BJ (cell line): ENCODE measurements at regions of chr15 and their contacts with region 1.

Region 1: DNA sequence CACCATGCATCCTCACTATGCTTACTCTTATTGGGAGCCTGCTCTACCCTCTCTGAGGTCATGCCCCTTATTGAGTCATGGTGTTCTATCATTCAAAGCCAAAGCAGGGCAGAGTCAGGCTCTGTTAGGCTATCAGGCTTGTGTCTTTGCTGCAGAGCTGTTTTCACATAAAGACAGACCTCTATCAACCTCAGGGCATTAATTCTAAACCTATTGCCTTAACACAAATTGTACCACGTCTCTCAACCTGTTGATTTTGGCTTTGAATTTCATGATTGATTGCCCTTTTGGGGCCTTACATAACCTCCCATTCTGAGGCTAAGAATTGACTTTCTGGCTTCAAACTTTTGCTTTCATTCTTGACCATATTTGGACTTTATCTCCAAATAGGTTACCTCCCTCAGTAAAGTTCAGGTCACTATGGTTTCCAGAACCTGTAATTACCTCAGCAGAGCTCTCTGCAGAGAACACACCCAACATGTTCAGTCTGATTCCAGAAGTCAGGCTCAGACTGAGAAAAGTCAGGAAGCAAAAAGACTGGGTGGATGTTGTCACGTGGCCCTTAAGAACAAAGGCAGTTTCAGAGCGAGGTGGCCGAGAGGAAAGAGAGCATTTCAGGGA is 221.4 kb upstream of the NANOGP8 start:
- DNase-seq: no peak
- H3K4me3 ChIP-seq: no peak overlapping the region
- H3K27me3 ChIP-seq: no peaks in the 10 kb centered on the region
- CTCF ChIP-seq: no peak

Region 2: DNA sequence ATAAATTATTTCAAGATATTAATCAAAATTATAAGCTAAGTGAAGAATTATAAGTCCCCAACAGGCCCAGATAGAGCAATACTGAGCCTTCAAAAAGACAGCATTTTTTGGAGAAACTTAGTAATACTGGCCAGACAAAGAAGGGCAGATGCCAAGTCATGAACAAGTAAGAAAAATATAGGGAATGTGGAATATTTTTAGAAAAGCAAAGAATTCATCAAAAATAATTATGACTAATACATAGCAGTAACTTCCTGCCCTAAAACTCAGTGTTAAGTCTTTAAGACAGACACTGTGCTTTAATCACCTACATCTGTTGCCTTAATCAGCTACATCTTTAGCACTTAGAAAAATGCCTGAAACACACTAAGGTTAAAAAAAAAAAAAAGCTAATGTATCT is 208.3 kb after region 1 on chr15:
- CTCF ChIA-PET with region 1: no interaction called
- POLR2A ChIA-PET with region 1: no interaction called
- DNase-seq: peak; percentile 7
- H3K4me3 ChIP-seq: no peak overlapping the region
- H3K27me3 ChIP-seq: no peaks in the 10 kb centered on the region
- CTCF ChIP-seq: no peak

Region 3: GRCh38 chr15:36753173-36753572 is 1446.7 kb after region 1 on chr15:
- CTCF ChIA-PET with region 1: no interaction called
- POLR2A ChIA-PET with region 1: interaction called, 10 read pairs
- DNase-seq: no peak
- H3K4me3 ChIP-seq: no peak overlapping the region
- H3K27me3 ChIP-seq: no peaks in the 10 kb centered on the region
- CTCF ChIP-seq: no peak